B cell (primary cell): ENCODE measurements at regions of chr16 and their contacts with region 1.

Region 1: DNA sequence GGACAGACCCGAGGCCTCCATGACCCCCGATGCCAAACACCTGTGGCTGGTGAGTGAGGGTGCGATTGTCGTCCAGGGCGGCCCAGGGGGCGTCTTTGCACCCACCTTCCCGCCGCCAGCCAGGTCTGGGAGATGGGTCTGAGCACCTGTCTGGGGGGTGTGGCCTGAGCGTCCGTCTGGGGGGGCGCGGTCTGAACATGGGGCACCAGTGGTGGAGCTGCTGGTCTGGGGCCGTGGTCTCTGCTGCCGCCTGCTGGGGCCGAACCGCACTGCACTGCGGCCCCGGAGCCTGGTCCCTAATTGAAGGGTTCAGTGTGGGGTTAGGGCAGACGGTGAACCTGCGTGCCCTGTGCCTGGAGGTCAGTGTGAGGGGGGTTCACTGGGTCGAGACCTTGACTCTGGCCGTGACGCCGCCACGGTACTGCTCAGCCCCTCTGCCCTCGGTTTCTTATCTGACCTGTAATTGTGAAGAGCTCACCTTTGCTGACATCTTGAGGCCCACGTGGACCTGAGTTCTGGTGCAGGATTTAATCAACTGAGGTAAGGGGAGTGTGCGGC is 12.6 kb upstream of the TCF25 start:
- DNase-seq: peak; percentile 84
- ATAC-seq: peak; percentile 93
- H3K4me3 ChIP-seq: no peak overlapping the region
- H3K4me3 Mint-ChIP-seq: no peak overlapping the region
- H3K27ac ChIP-seq: no peak overlapping the region
- H3K27ac Mint-ChIP-seq: no peak overlapping the region
- H3K4me1 ChIP-seq: peaks cover 17 to 29% of the 10 kb centered on the region in 2 donors
- H3K4me1 Mint-ChIP-seq: peaks cover 29% of the 10 kb centered on the region
- H3K27me3 ChIP-seq: peaks cover 0 to 4% (median 0%) of the 10 kb centered on the region in 4 experiments
- H3K27me3 Mint-ChIP-seq: no peaks in the 10 kb centered on the region
- CTCF ChIP-seq: peak; percentile 92

Region 2: DNA sequence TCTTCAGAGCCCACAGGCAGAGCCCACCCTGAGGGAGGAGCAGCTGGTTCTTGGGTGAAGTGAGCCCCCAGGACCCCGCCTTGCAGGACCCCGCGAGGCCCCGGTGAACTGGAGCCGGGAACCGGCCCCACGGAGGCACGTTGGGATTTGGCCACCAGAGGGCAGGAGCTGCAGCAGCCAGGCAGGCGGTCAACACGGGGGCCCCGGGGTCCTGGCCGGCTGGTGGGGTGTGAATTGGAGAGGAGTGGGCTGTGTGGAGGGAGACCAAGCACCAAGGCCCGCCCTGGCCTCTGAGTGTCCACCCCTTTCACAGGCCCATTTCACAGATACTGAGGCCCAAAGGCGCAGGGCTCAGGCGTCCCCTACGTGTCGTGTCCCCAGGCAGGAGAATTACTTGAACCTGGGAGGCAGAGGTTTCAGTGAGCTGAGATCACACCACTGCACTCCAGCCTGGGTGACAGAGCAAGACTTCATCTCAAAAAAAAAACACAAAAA is 245.2 kb before region 1 on chr16:
- CTCF ChIA-PET with region 1: interaction called, 11 read pairs
- POLR2A ChIA-PET with region 1: no interaction called
- intact Hi-C with region 1: loop called (anchors 2 kb)
- DNase-seq: peak; percentile 59
- ATAC-seq: no peak
- H3K4me3 ChIP-seq: no peak overlapping the region
- H3K4me3 Mint-ChIP-seq: no peak overlapping the region
- H3K27ac ChIP-seq: no peak overlapping the region
- H3K27ac Mint-ChIP-seq: no peak overlapping the region
- H3K4me1 ChIP-seq: peaks cover 0 to 8% of the 10 kb centered on the region in 2 donors
- H3K4me1 Mint-ChIP-seq: peaks cover 9% of the 10 kb centered on the region
- H3K27me3 ChIP-seq: peaks cover 0 to 4% (median 0%) of the 10 kb centered on the region in 4 experiments
- H3K27me3 Mint-ChIP-seq: peaks cover 12% of the 10 kb centered on the region
- CTCF ChIP-seq: peak; percentile 70

Region 3: GRCh38 chr16:89749647-89750046 is 111.2 kb before region 1 on chr16:
- CTCF ChIA-PET with region 1: interaction called, 14 read pairs
- POLR2A ChIA-PET with region 1: no interaction called
- intact Hi-C with region 1: no loop called
- DNase-seq: peak; percentile 33
- ATAC-seq: peak; percentile 17
- H3K4me3 ChIP-seq: no peak overlapping the region
- H3K4me3 Mint-ChIP-seq: no peak overlapping the region
- H3K27ac ChIP-seq: peak overlapping the region in 1 of 2 donors; percentile 36
- H3K27ac Mint-ChIP-seq: no peak overlapping the region
- H3K4me1 ChIP-seq: peaks cover 4 to 6% of the 10 kb centered on the region in 2 donors
- H3K4me1 Mint-ChIP-seq: peaks cover 8% of the 10 kb centered on the region
- H3K27me3 ChIP-seq: no peaks in the 10 kb centered on the region
- H3K27me3 Mint-ChIP-seq: no peaks in the 10 kb centered on the region
- CTCF ChIP-seq: no peak

Region 4: DNA sequence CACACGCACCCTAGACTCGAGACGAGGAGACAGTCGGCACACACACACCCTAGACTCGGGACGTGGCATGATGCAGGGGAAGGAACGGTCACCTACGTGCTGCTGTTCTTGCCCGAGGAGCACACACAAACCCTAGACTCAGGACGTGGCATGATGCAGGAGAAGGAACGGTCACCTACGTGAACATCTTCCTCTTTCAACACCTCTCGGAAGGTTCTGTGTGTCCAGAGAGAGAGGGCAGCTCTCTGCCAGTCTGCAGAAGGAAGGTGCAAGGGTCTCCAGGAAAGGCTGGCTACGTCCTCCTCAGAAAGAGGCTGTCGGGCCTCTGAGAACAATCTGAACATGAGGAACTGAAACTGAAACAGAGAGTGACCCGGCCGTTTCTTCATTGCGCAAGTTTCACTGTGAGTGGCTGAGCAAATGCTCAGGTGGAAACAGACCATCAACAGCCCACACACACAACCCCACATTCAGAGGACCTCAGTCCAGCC is 96.1 kb before region 1 on chr16:
- CTCF ChIA-PET with region 1: interaction called, 3 read pairs
- POLR2A ChIA-PET with region 1: interaction called, 3 read pairs
- intact Hi-C with region 1: loop called (anchors 5 kb)
- DNase-seq: peak; percentile 89
- ATAC-seq: peak; percentile 88
- H3K4me3 ChIP-seq: peak overlapping the region; percentile 35 to 76 (median 56)
- H3K4me3 Mint-ChIP-seq: peak overlapping the region; percentile 95
- H3K27ac ChIP-seq: peak overlapping the region; percentile 67 to 86
- H3K27ac Mint-ChIP-seq: peak overlapping the region; percentile 97
- H3K4me1 ChIP-seq: peaks cover 37 to 52% of the 10 kb centered on the region in 2 donors
- H3K4me1 Mint-ChIP-seq: peaks cover 51% of the 10 kb centered on the region
- H3K27me3 ChIP-seq: no peaks in the 10 kb centered on the region
- H3K27me3 Mint-ChIP-seq: no peaks in the 10 kb centered on the region
- CTCF ChIP-seq: no peak

Region 5: DNA sequence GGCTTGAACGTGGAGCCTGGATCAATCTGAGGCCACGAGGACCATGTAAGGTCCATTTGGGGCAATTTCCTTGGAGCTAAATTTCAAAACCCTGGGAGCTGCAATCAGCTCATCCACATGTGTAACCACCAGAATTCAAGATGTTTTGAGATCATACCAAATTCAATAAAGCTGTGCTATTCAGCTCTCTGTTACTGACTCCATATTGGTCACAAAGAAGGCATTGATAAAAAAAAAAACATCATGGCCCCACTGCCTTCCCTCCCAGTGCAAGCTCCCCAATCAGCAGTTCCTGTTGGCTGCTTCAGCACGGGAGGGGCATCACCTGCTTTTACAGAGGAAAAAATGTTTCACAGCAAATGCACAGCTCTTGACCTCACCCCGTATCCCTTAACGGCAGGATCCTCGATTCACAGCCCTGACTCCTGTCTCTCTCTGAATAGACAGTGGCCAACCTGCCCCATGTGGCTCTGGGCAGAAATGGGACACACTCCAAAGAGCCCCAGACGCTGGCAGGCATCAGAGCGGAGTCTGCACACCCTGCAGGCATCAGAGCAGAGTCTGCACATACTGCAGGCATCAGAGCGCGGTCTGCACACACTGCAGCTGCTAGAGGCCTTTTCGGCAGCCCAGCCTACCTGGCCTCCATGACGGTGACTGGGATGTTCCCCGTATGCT is 81.5 kb before region 1 on chr16:
- CTCF ChIA-PET with region 1: no interaction called
- POLR2A ChIA-PET with region 1: no interaction called
- intact Hi-C with region 1: no loop called
- DNase-seq: no peak
- ATAC-seq: no peak
- H3K4me3 ChIP-seq: no peak overlapping the region
- H3K4me3 Mint-ChIP-seq: no peak overlapping the region
- H3K27ac ChIP-seq: no peak overlapping the region
- H3K27ac Mint-ChIP-seq: no peak overlapping the region
- H3K4me1 ChIP-seq: no peaks in the 10 kb centered on the region
- H3K4me1 Mint-ChIP-seq: no peaks in the 10 kb centered on the region
- H3K27me3 ChIP-seq: no peaks in the 10 kb centered on the region
- H3K27me3 Mint-ChIP-seq: no peaks in the 10 kb centered on the region
- CTCF ChIP-seq: no peak

Region 6: GRCh38 chr16:89795676-89796075 is 65.2 kb before region 1 on chr16:
- CTCF ChIA-PET with region 1: interaction called, 12 read pairs
- POLR2A ChIA-PET with region 1: no interaction called
- intact Hi-C with region 1: no loop called
- DNase-seq: no peak
- ATAC-seq: no peak
- H3K4me3 ChIP-seq: no peak overlapping the region
- H3K4me3 Mint-ChIP-seq: no peak overlapping the region
- H3K27ac ChIP-seq: no peak overlapping the region
- H3K27ac Mint-ChIP-seq: no peak overlapping the region
- H3K4me1 ChIP-seq: peaks cover 0 to 4% of the 10 kb centered on the region in 2 donors
- H3K4me1 Mint-ChIP-seq: peaks cover 2% of the 10 kb centered on the region
- H3K27me3 ChIP-seq: no peaks in the 10 kb centered on the region
- H3K27me3 Mint-ChIP-seq: no peaks in the 10 kb centered on the region
- CTCF ChIP-seq: no peak

Region 7: DNA sequence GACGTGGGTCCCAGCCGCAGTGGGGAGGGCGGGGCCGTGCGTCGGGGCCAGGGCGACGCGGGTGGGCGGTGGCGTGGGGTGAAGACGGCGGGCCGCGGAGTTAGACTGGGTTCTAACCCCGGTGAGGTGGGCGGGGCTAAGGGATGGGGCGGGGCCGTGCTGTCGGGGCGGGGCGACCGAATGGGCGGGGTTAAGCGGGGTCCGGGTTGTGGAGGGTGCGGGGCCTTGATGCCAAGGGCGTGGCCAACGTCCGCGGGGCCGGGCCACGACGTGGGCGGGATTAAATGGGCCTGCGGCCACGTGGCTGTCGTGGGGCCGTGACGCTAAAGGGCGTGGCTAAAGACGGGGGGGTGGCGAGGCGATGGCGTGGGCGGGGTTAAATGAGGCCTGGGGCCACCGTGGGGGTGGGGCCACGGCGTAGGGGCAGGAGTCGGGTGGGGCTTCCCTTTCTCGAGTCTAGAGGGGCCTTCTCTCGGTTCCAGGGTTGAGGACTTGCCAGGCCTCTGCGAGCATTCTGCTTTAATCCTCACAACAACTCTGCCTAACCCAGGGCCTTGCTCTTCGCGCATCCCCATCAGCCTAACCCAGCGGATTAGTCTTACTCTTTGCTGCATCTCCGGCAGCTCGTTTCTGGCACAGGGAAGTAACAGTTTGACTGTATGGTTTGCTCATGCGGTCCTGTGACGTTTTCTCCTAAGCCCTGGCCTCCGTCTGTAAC is 13.3 kb after region 1 on chr16:
- CTCF ChIA-PET with region 1: interaction called, 40 read pairs
- POLR2A ChIA-PET with region 1: interaction called, 12 read pairs
- intact Hi-C with region 1: no loop called
- DNase-seq: peak; percentile 99
- ATAC-seq: peak; percentile 82
- H3K4me3 ChIP-seq: peak overlapping the region in 4 of 5 experiments; percentile 92 to 99 (median 97)
- H3K4me3 Mint-ChIP-seq: peak overlapping the region; percentile 95
- H3K27ac ChIP-seq: peak overlapping the region; percentile 100
- H3K27ac Mint-ChIP-seq: peak overlapping the region; percentile 99
- H3K4me1 ChIP-seq: peaks cover 14 to 19% of the 10 kb centered on the region in 2 donors
- H3K4me1 Mint-ChIP-seq: peaks cover 16% of the 10 kb centered on the region
- H3K27me3 ChIP-seq: no peaks in the 10 kb centered on the region
- H3K27me3 Mint-ChIP-seq: no peaks in the 10 kb centered on the region
- CTCF ChIP-seq: no peak

Region 8: DNA sequence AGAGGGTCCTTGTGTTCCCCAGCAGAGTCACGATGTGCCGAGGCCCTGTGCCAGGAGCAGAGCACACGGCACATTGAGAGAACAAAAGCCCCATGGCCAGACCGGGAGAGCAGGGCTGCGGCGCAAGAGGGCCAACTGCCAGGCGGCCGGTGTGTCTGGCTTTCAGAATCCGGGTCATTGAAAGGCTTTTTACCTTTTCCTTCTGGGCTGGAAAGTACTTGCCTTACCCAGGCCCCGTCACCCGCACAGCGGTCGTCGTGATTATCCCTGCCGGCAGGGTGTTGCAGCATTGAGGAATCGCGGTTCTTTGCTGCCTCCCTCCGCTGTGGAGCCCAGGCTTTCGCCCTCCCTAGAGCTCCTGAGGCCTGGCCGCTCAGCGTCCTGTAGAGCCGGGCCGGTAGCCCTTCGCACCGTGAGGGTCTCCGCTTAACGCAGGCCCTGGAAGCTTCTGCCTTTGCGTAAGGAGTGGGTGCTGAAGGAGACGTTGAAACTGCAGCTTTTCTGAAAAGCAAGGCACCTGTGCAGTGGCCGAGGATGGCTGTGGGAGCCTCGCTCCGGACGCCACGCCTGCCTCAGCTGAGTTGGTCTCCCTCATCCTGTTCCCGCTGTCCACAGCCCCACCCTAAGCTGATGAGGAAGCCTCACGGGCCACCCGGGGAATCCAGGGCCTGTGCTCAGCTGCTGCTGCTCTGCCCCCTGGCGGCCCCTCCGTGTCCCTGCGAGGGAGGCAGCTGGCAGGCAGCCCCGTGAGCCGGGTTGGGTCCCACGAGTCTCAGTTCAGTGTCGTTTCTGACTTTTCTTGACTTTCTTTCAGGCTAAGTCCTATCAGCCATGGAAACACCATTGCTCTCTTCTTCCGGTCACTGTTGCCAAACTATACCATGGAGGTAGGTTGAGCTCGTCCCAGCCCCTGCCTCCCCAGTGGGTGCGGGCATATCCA is 49.2 kb after region 1 on chr16:
- CTCF ChIA-PET with region 1: interaction called, 14 read pairs
- POLR2A ChIA-PET with region 1: no interaction called
- intact Hi-C with region 1: no loop called
- DNase-seq: peak; percentile 77
- ATAC-seq: peak; percentile 80
- H3K4me3 ChIP-seq: no peak overlapping the region
- H3K4me3 Mint-ChIP-seq: no peak overlapping the region
- H3K27ac ChIP-seq: no peak overlapping the region
- H3K27ac Mint-ChIP-seq: no peak overlapping the region
- H3K4me1 ChIP-seq: peaks cover 0 to 5% of the 10 kb centered on the region in 2 donors
- H3K4me1 Mint-ChIP-seq: peaks cover 12% of the 10 kb centered on the region
- H3K27me3 ChIP-seq: no peaks in the 10 kb centered on the region
- H3K27me3 Mint-ChIP-seq: no peaks in the 10 kb centered on the region
- CTCF ChIP-seq: peak; percentile 91